ENCODE measurements at regions of chr9 and their contacts with region 1.

Region 1: DNA sequence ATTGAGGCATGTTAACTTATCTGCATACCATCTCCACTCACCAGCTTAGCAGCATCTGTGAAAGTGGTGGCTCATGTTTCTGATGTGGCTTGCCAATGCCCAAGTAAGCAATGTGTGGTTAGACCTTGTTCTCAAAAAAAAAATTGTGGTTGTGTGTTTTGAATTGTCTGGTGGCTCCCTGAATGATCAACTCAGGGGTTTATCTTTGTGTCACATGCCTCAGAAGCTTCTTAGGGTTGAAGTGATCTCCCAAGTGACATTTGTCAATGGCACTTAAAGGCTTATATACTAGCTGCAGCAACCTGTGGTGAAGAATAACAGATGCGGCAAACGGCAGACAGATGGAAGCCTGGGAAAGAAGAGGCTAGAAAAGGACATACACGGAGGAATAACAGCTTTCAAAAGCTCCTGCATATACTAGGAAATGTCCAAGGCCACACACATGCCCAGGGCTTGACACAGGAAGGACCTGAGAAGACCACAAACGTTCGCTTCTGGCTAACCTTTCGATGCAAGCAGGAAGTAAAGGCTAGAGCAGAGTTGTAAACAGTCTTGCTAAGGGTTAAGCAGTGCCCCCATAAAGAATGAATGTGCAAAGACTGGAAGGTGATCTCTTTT is 42.2 kb upstream of the FSD1L start:
- DNase-seq: no peak
- H3K4me3 Mint-ChIP-seq: no peak overlapping the region
- H3K27ac Mint-ChIP-seq: no peak overlapping the region
- H3K4me1 Mint-ChIP-seq: no peaks in the 10 kb centered on the region
- H3K27me3 Mint-ChIP-seq: no peaks in the 10 kb centered on the region
- CTCF ChIP-seq: no peak

Region 2: DNA sequence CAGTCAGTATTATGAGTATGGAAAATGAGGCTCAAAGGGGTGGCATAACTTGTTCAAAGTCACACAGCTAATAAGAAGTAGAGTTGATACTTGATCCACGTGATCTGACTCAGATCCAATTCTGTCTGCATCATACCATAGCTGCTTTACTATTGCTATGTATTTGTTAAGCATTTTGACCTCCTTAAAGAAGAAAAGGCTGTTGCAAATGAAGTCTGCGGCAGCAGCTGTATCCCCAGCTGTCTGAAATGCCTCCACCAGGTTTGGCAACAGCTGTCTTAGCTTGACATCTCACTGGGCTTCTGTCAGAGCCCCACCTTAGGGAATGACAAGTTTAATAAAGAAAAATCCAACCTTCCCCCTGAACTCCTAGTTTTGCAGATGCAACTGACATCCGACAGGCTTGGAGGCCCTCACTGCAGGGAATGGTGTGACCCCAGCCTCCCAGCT is 236.7 kb before region 1 on chr9:
- CTCF ChIA-PET with region 1: interaction called, 197 read pairs
- POLR2A ChIA-PET with region 1: no interaction called
- intact Hi-C with region 1: loop called (anchors 5 kb)
- DNase-seq: no peak
- H3K4me3 Mint-ChIP-seq: no peak overlapping the region
- H3K27ac Mint-ChIP-seq: no peak overlapping the region
- H3K4me1 Mint-ChIP-seq: peaks cover 7% of the 10 kb centered on the region
- H3K27me3 Mint-ChIP-seq: no peaks in the 10 kb centered on the region
- CTCF ChIP-seq: no peak

Measured in MCF 10A (cell line).